ENCODE measurements at regions of chr9 and their contacts with region 1.

Region 1: GRCh38 chr9:27037499-27037898 is 32.0 kb upstream of the LRRC19 start:
- DNase-seq: no peak
- H3K4me3 ChIP-seq: no peak overlapping the region
- H3K27ac ChIP-seq: no peak overlapping the region
- H3K4me1 ChIP-seq: no peaks in the 10 kb centered on the region
- H3K27me3 ChIP-seq: no peaks in the 10 kb centered on the region
- CTCF ChIP-seq: no peak

Region 2: GRCh38 chr9:27094640-27095298 is 57.3 kb after region 1 on chr9:
- intact Hi-C with region 1: no loop called
- DNase-seq: no peak
- H3K4me3 ChIP-seq: no peak overlapping the region
- H3K27ac ChIP-seq: no peak overlapping the region
- H3K4me1 ChIP-seq: peaks cover 0 to 9% (median 0%) of the 10 kb centered on the region in 4 donors
- H3K27me3 ChIP-seq: no peaks in the 10 kb centered on the region
- CTCF ChIP-seq: no peak

Region 3: DNA sequence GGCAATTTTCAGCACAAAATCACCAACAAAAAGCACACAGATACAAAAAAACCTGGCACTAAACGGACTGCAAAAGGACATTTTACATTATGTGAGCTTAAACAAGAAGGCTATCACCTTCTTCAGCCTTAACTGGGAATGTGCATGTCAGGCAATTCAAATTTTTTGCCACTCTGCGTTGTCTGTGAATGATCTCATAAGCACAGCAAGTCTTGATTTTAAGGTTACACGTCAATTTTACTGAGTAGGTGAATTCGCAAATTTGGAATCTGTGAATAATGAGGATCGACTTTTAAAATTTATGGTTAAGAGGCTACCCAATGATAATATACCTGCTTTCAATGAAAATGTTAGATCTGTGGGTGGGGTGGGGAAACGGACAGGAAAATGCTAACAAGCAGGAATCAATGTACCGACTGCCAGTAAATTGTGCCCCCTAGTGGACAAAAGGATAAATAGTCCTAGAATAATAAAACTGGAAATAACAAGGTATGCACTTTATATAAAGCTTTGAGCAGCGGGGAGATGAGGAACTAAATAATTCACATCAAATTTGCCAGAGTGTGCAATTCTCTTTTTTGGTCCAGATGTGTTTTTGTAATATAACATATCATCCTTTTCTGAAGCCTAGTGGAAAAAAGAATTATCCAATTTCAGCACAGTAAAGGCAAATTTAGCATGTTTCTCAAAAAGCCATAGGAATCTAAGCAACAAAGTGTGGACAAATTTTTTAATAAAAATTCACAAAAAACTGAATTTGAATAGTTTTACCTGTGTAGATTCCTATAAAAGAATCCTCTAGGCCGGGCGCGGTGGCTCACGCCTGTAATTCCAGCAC is 238.9 kb after region 1 on chr9:
- intact Hi-C with region 1: loop called (anchors 5 kb)
- DNase-seq: no peak
- H3K4me3 ChIP-seq: peak overlapping the region in 1 of 2 donors; percentile 14
- H3K27ac ChIP-seq: no peak overlapping the region
- H3K4me1 ChIP-seq: peaks cover 0 to 4% (median 0%) of the 10 kb centered on the region in 4 donors
- H3K27me3 ChIP-seq: no peaks in the 10 kb centered on the region
- CTCF ChIP-seq: peak; percentile 70 to 72

Region 4: GRCh38 chr9:27573634-27574590 is 536.4 kb after region 1 on chr9:
- intact Hi-C with region 1: no loop called
- DNase-seq: peak; percentile 99
- H3K4me3 ChIP-seq: peak overlapping the region; percentile 69 to 97
- H3K27ac ChIP-seq: peak overlapping the region; percentile 98 to 100
- H3K4me1 ChIP-seq: peaks cover 0 to 23% (median 9%) of the 10 kb centered on the region in 4 donors
- H3K27me3 ChIP-seq: no peaks in the 10 kb centered on the region
- CTCF ChIP-seq: no peak

Measured in tibial artery (tissue), 4 donors.